Heart left ventricle (tissue), 16 donors: ENCODE measurements at regions of chr13 and their contacts with region 1.

Region 1: GRCh38 chr13:30465585-30466357 is at the start of gene HMGB1:
- DNase-seq: peak; percentile 98 to 99 (median 99)
- ATAC-seq: peak; percentile 96 to 99 (median 98)
- H3K4me3 ChIP-seq: peak within 1 kb of the TSS; percentile 70 to 99 (median 94)
- H3K27ac ChIP-seq: peak within 1 kb of the TSS; percentile 98 to 100 (median 100)
- H3K4me1 ChIP-seq: peaks cover 2 to 39% (median 29%) of the 10 kb centered on the region in 12 donors
- H3K27me3 ChIP-seq: no peaks in the 10 kb centered on the region
- CTCF ChIP-seq: no peak
- POLR2A ChIP-seq: peak; percentile 94 to 98
- total RNA-seq, gene HMGB1: 137 to 215 (median 164) TPM

Region 2: GRCh38 chr13:30132623-30133553 is 332.9 kb before region 1 on chr13:
- intact Hi-C with region 1: loop called in 8 of 10 experiments (anchors 5 kb)
- DNase-seq: peak; percentile 93 to 98 (median 96)
- ATAC-seq: peak; percentile 88 to 98 (median 96)
- H3K4me3 ChIP-seq: peak overlapping the region in 1 of 12 donors; percentile 3
- H3K27ac ChIP-seq: peak overlapping the region in 1 of 12 donors; percentile 29
- H3K4me1 ChIP-seq: peaks cover 0 to 16% (median 2%) of the 10 kb centered on the region in 12 donors
- H3K27me3 ChIP-seq: no peaks in the 10 kb centered on the region
- CTCF ChIP-seq: peak; percentile 87 to 98 (median 92)
- POLR2A ChIP-seq: no peak

Region 3: GRCh38 chr13:30355384-30355699 is 110.4 kb before region 1 on chr13:
- intact Hi-C with region 1: loop called in 3 of 10 experiments (anchors 5 kb)
- DNase-seq: peak in 1 of 5 donors; percentile 37
- ATAC-seq: peak in 2 of 4 donors; percentile 57 to 73
- H3K4me3 ChIP-seq: no peak overlapping the region
- H3K27ac ChIP-seq: no peak overlapping the region
- H3K4me1 ChIP-seq: peaks cover 0 to 9% (median 0%) of the 10 kb centered on the region in 12 donors
- H3K27me3 ChIP-seq: no peaks in the 10 kb centered on the region
- CTCF ChIP-seq: peak; percentile 43 to 59 (median 51)
- POLR2A ChIP-seq: no peak

Region 4: DNA sequence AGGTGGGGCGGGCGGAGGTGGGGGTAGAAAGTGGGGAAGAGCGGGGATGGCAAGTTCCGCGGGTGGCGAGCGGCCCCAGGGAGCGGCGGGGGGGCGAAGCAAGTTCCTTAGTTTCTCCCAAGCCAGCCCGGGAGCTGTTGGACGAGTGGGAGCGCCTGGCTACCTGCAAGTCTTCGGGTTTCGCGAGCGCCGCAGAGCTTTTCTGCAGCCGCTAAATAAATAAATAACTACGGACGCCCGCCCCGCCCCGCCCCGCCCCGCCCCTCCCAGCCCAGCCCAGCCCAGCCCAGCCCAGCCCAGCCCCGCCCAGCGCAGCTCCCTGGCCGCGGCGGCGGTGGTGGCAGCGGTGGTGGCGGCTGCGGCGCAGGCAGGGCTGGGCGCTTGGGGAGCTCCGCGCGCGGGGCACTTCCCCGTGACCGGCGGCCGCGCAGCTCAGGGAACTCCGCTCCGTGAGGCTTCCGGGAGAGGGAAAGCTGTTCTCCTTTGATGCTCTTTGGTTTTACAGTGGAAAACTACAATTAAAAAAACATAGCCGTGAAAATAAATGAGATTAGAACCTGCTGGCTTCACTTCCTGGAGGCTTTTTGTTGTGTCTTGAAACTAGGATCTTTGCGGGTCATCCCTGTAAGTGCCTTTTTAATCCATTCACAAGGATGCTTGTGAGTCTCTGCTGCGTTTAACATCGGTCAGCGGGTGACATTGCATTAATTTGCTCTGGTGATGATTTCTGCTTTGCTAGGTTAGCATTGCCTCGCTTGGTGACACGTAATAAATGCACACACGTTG is 43.5 kb before region 1 on chr13 and contains the start of gene UBE2L5:
- intact Hi-C with region 1: loop called in 5 of 10 experiments (anchors 1 to 5 kb)
- DNase-seq: peak; percentile 78 to 91 (median 84)
- ATAC-seq: peak; percentile 82 to 95 (median 90)
- H3K4me3 ChIP-seq: peak within 1 kb of the TSS; percentile 16 to 81 (median 67)
- H3K27ac ChIP-seq: peak within 1 kb of the TSS; percentile 80 to 98 (median 94)
- H3K4me1 ChIP-seq: peaks cover 0 to 18% (median 7%) of the 10 kb centered on the region in 12 donors
- H3K27me3 ChIP-seq: no peaks in the 10 kb centered on the region
- CTCF ChIP-seq: no peak
- POLR2A ChIP-seq: peak in 1 of 2 donors; percentile 51
- total RNA-seq, gene UBE2L5: 0.32 TPM in 1 of 9 donors, not detected in the others

Region 5: DNA sequence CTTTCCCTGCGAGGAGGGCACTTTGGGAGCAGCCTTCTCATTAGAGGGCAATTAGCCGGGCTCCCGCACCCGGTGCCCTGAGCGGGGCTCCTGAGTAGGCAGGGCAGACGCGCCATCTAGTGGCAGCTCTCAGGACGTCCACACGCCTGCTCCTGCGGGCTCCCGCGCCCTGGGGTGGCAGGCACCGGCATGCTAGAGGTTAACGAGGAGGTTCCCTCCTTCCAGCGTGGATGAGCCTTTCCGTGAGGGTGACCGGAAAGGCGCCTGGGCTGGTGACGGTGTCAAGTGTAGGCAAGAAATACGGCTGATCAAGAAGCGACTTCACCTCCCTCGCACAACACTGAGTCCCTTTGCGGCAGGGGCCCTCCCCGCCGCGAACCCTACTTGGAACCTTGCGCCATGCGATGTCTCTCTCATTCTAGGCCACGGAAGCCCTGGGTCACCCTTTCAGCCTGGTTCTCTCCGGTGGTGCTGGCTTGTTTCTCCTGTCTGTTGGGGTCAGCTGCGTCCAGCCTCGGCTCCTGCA is 337.2 kb after region 1 on chr13:
- intact Hi-C with region 1: loop called in 4 of 10 experiments (anchors 5 to 10 kb)
- DNase-seq: peak; percentile 83 to 93 (median 88)
- ATAC-seq: peak; percentile 89 to 98 (median 97)
- H3K4me3 ChIP-seq: peak overlapping the region in 9 of 12 donors; percentile 44 to 66 (median 47)
- H3K27ac ChIP-seq: peak overlapping the region in 3 of 12 donors; percentile 38 to 66 (median 54)
- H3K4me1 ChIP-seq: peaks cover 0 to 35% (median 19%) of the 10 kb centered on the region in 12 donors
- H3K27me3 ChIP-seq: no peaks in the 10 kb centered on the region
- CTCF ChIP-seq: peak; percentile 90 to 98 (median 96)
- POLR2A ChIP-seq: no peak